ENCODE measurements at regions of chr14 and their contacts with region 1.

Region 1: GRCh38 chr14:20327005-20327869 is 5.8 kb downstream of the CCNB1IP1 start:
- DNase-seq: peak; percentile 78
- H3K4me3 Mint-ChIP-seq: no peak overlapping the region
- H3K27ac Mint-ChIP-seq: no peak overlapping the region
- H3K4me1 Mint-ChIP-seq: peaks cover 31% of the 10 kb centered on the region
- H3K27me3 Mint-ChIP-seq: no peaks in the 10 kb centered on the region
- CTCF ChIP-seq: peak; percentile 66

Region 2: GRCh38 chr14:20195911-20196310 is 131.3 kb before region 1 on chr14:
- CTCF ChIA-PET with region 1: no interaction called
- POLR2A ChIA-PET with region 1: no interaction called
- intact Hi-C with region 1: no loop called
- DNase-seq: peak; percentile 8
- H3K4me3 Mint-ChIP-seq: no peak overlapping the region
- H3K27ac Mint-ChIP-seq: no peak overlapping the region
- H3K4me1 Mint-ChIP-seq: peaks cover 6% of the 10 kb centered on the region
- H3K27me3 Mint-ChIP-seq: peaks cover 79% of the 10 kb centered on the region
- CTCF ChIP-seq: peak; percentile 7

Region 3: GRCh38 chr14:20343092-20343861 is 16.0 kb after region 1 on chr14 and contains the start of gene PARP2:
- CTCF ChIA-PET with region 1: interaction called, 57 read pairs
- POLR2A ChIA-PET with region 1: interaction called, 205 read pairs
- intact Hi-C with region 1: no loop called
- DNase-seq: peak; percentile 100
- H3K4me3 Mint-ChIP-seq: peak within 1 kb of the TSS; percentile 78
- H3K27ac Mint-ChIP-seq: peak within 1 kb of the TSS; percentile 92
- H3K4me1 Mint-ChIP-seq: peaks cover 7% of the 10 kb centered on the region
- H3K27me3 Mint-ChIP-seq: no peaks in the 10 kb centered on the region
- CTCF ChIP-seq: no peak
- total RNA-seq, gene PARP2: 30.4 and 33.4 TPM in 2 replicates

Region 4: DNA sequence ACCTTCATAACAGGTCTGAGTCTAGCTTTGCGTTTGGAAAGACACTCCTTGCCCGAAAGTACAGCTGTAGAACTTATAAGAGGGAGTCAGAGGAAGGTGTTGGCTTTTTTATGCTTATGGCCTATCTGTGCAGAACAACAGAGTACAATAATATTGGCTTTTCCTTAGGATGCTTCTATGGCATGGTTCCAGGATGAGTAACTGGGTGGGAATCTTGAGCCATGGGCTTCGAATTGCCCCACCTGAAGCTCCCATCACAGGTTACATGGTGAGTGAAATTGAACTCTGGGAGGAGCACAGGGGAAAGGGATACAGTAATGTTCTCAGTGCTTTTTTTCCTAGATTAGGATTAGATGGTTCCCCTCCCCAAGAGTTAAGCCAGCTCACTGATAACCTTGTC is 29.2 kb after region 1 on chr14:
- CTCF ChIA-PET with region 1: interaction called, 23 read pairs
- POLR2A ChIA-PET with region 1: interaction called, 3 read pairs
- intact Hi-C with region 1: no loop called
- DNase-seq: peak; percentile 17
- H3K4me3 Mint-ChIP-seq: no peak overlapping the region
- H3K27ac Mint-ChIP-seq: no peak overlapping the region
- H3K4me1 Mint-ChIP-seq: no peaks in the 10 kb centered on the region
- H3K27me3 Mint-ChIP-seq: no peaks in the 10 kb centered on the region
- CTCF ChIP-seq: no peak

Region 5: DNA sequence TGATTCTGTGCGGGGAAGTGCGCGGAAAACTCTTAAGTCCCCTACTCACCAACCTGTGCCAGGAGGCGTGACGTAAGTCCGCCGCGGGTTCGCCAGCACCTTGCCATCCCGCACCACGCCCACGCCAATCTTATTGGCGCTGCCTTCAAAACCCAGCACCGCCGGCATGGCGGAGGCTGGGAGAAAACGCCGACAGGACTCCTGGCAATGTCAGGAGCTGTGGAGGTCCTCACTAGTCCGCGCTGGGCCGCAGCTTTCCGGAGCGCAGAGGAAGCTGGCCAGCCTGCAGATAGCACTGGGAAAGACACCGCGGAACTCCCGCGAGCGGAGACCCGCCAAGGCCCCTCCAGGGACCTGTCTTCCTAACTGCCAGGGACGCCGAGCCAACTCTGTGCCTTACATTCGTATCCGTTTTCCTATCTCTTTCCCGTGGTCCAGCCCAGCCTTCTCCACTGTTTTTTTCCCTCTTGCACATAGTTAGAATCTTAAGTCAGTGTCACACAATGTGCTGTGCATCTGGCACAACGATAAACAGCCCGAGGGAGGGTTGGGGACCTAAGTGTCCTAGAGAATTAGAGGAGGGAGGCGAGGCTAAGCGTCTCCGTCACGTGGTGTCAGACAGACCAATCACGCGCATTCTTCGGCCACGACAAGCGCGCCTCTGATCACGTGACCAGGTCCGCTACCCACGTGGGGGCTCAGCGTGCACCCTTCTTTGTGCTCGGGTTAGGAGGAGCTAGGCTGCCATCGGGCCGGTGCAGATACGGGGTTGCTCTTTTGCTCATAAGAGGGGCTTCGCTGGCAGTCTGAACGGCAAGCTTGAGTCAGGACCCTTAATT is 127.5 kb after region 1 on chr14 and contains the starts of genes APEX1 and OSGEP:
- CTCF ChIA-PET with region 1: interaction called, 7 read pairs
- POLR2A ChIA-PET with region 1: interaction called, 22 read pairs
- intact Hi-C with region 1: loop called (anchors 1 kb)
- DNase-seq: peak; percentile 99
- H3K4me3 Mint-ChIP-seq: no peak within 1 kb of the TSS
- H3K27ac Mint-ChIP-seq: no peak within 1 kb of the TSS
- H3K4me1 Mint-ChIP-seq: peaks cover 7% of the 10 kb centered on the region
- H3K27me3 Mint-ChIP-seq: no peaks in the 10 kb centered on the region
- CTCF ChIP-seq: no peak
- total RNA-seq, gene APEX1: 140 and 168 TPM in 2 replicates
- total RNA-seq, gene OSGEP: 27.2 and 34.7 TPM in 2 replicates

Region 6: DNA sequence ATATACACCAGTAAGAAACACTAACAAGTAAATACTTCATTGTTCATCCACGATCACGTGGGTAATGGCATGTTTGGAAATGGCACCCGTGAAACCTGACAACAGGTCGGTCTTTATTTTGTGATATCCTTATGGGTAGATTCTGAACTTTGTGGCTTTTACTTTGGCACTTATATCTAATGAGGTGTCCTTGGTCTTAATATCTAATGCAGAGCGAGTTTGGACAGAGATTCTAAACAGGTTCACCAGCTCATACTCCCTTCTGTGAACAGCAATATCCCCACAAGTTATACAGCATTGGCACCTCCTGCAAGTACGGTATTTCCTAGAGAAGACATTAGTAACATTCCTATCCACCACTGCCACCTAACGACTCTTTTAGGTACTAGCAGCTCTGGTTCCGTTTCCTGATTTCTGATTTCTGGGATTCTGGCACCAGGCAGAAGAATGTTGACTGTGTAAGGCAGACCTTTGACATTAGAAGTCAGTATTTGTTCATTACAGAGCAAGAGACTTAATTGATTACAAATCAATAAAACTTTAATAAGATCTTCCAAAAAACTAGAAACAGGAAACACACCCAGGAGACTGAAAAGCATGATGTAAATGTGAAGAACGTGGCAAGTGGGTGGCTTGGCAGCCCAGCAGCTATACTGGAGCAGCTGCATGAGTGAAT is 363.7 kb after region 1 on chr14:
- CTCF ChIA-PET with region 1: interaction called, 26 read pairs
- POLR2A ChIA-PET with region 1: no interaction called
- intact Hi-C with region 1: no loop called
- DNase-seq: peak; percentile 77
- H3K4me3 Mint-ChIP-seq: peak overlapping the region; percentile 47
- H3K27ac Mint-ChIP-seq: no peak overlapping the region
- H3K4me1 Mint-ChIP-seq: peaks cover 10% of the 10 kb centered on the region
- H3K27me3 Mint-ChIP-seq: no peaks in the 10 kb centered on the region
- CTCF ChIP-seq: peak; percentile 81

Measured in MCF 10A (cell line).